ENCODE measurements at regions of chr6 and their contacts with region 1.

Region 1: GRCh38 chr6:8435160-8435852 is at the start of gene SLC35B3:
- DNase-seq: peak; percentile 99
- ATAC-seq: peak; percentile 95
- H3K4me3 Mint-ChIP-seq: peak within 1 kb of the TSS; percentile 95
- H3K27ac Mint-ChIP-seq: peak within 1 kb of the TSS; percentile 95
- H3K4me1 Mint-ChIP-seq: peaks cover 42% of the 10 kb centered on the region
- H3K27me3 Mint-ChIP-seq: no peaks in the 10 kb centered on the region
- CTCF ChIP-seq: no peak
- total RNA-seq, gene SLC35B3: 12.9 and 13.3 TPM in 2 replicates

Region 2: GRCh38 chr6:8054276-8054675 is 381.0 kb before region 1 on chr6:
- CTCF ChIA-PET with region 1: no interaction called
- POLR2A ChIA-PET with region 1: no interaction called
- intact Hi-C with region 1: no loop called
- DNase-seq: no peak
- ATAC-seq: no peak
- H3K4me3 Mint-ChIP-seq: no peak overlapping the region
- H3K27ac Mint-ChIP-seq: no peak overlapping the region
- H3K4me1 Mint-ChIP-seq: peaks cover 2% of the 10 kb centered on the region
- H3K27me3 Mint-ChIP-seq: no peaks in the 10 kb centered on the region
- CTCF ChIP-seq: no peak

Region 3: GRCh38 chr6:8102122-8102958 is 333.0 kb before region 1 on chr6 and contains the start of gene EEF1E1:
- CTCF ChIA-PET with region 1: no interaction called
- POLR2A ChIA-PET with region 1: no interaction called
- intact Hi-C with region 1: loop called (anchors 1 kb)
- DNase-seq: peak; percentile 80
- ATAC-seq: peak; percentile 98
- H3K4me3 Mint-ChIP-seq: peak within 1 kb of the TSS; percentile 97
- H3K27ac Mint-ChIP-seq: peak within 1 kb of the TSS; percentile 93
- H3K4me1 Mint-ChIP-seq: peaks cover 25% of the 10 kb centered on the region
- H3K27me3 Mint-ChIP-seq: peaks cover 14% of the 10 kb centered on the region
- CTCF ChIP-seq: no peak
- total RNA-seq, gene EEF1E1: 32.5 and 33.0 TPM in 2 replicates

Region 4: GRCh38 chr6:8674126-8674525 is 238.8 kb after region 1 on chr6:
- CTCF ChIA-PET with region 1: no interaction called
- POLR2A ChIA-PET with region 1: no interaction called
- intact Hi-C with region 1: loop called (anchors 10 kb)
- DNase-seq: no peak
- ATAC-seq: peak; percentile 50
- H3K4me3 Mint-ChIP-seq: no peak overlapping the region
- H3K27ac Mint-ChIP-seq: no peak overlapping the region
- H3K4me1 Mint-ChIP-seq: peaks cover 14% of the 10 kb centered on the region
- H3K27me3 Mint-ChIP-seq: no peaks in the 10 kb centered on the region
- CTCF ChIP-seq: no peak

Region 5: GRCh38 chr6:10404107-10404798 is 1968.9 kb after region 1 on chr6:
- CTCF ChIA-PET with region 1: no interaction called
- POLR2A ChIA-PET with region 1: no interaction called
- intact Hi-C with region 1: loop called (anchors 2 kb)
- DNase-seq: peak; percentile 80
- ATAC-seq: peak; percentile 94
- H3K4me3 Mint-ChIP-seq: peak overlapping the region; percentile 78
- H3K27ac Mint-ChIP-seq: peak overlapping the region; percentile 63
- H3K4me1 Mint-ChIP-seq: peaks cover 12% of the 10 kb centered on the region
- H3K27me3 Mint-ChIP-seq: peaks cover 54% of the 10 kb centered on the region
- CTCF ChIP-seq: no peak